CD4-positive, alpha-beta T cell (primary cell): ENCODE measurements at regions of chr17 and their contacts with region 1.

Region 1: GRCh38 chr17:52237151-52237550 is 78.6 kb upstream of the CA10 start:
- DNase-seq: no peak
- ATAC-seq: no peak
- H3K4me3 ChIP-seq: no peak overlapping the region
- H3K4me3 Mint-ChIP-seq: no peak overlapping the region
- H3K27ac ChIP-seq: no peak overlapping the region
- H3K27ac Mint-ChIP-seq: no peak overlapping the region
- H3K4me1 ChIP-seq: no peaks in the 10 kb centered on the region
- H3K4me1 Mint-ChIP-seq: no peaks in the 10 kb centered on the region
- H3K27me3 ChIP-seq: no peaks in the 10 kb centered on the region
- H3K27me3 Mint-ChIP-seq: no peaks in the 10 kb centered on the region
- CTCF ChIP-seq: no peak

Region 2: DNA sequence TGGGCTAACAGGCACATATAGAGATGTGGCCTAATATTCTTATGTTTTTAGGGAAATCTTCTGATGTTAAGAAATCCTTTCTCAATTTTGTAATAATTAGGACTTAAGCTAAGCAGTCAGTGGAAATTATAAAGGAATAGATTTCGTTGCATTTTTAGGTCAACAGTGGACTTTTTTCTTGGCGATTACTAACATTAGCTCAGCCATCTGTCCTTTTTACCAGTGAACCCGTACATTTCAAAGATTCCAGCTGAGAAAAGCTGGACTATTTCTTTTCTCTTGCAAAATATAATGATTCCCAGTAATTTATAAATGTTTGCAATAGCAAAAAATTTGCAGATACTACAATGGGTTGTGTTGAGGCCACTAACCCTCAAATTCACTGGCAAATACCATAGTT is 23.7 kb before region 1 on chr17:
- CTCF ChIA-PET with region 1: no interaction called
- POLR2A ChIA-PET with region 1: no interaction called
- intact Hi-C with region 1: loop called in 1 of 2 experiments (anchors 2 kb)
- DNase-seq: no peak
- ATAC-seq: no peak
- H3K4me3 ChIP-seq: no peak overlapping the region
- H3K4me3 Mint-ChIP-seq: no peak overlapping the region
- H3K27ac ChIP-seq: no peak overlapping the region
- H3K27ac Mint-ChIP-seq: no peak overlapping the region
- H3K4me1 ChIP-seq: no peaks in the 10 kb centered on the region
- H3K4me1 Mint-ChIP-seq: no peaks in the 10 kb centered on the region
- H3K27me3 ChIP-seq: no peaks in the 10 kb centered on the region
- H3K27me3 Mint-ChIP-seq: peaks cover 6% of the 10 kb centered on the region
- CTCF ChIP-seq: no peak